ENCODE measurements at regions of chr6 and their contacts with region 1.

Region 1: DNA sequence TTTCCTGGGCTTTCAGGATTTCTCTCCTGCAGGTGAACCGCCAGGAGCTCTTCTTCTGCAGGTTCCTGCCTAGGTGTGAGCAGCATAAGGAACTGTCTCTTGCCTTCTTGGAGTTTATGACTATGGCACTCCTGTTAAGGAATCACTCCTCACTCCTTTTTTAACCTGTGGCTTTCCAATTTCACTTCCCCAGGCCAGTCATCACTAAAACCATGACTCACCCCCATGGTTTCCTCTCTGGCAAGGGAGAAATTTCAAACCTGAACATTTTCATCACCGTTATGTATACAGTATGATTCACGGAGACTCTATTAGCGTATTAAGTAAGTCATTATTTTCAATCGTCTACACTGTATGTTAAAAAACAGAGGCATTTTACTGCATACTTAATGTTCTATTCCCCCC is 78.2 kb upstream of the ARID1B start:
- DNase-seq: no peak
- H3K4me3 ChIP-seq: no peak overlapping the region
- H3K27ac ChIP-seq: no peak overlapping the region
- H3K4me1 ChIP-seq: no peaks in the 10 kb centered on the region
- H3K27me3 ChIP-seq: no peaks in the 10 kb centered on the region
- CTCF ChIP-seq: no peak
- POLR2A ChIP-seq: no peak

Region 2: GRCh38 chr6:155561257-155561965 is 1137.6 kb before region 1 on chr6:
- intact Hi-C with region 1: no loop called
- DNase-seq: no peak
- H3K4me3 ChIP-seq: no peak overlapping the region
- H3K27ac ChIP-seq: no peak overlapping the region
- H3K4me1 ChIP-seq: no peaks in the 10 kb centered on the region
- H3K27me3 ChIP-seq: no peaks in the 10 kb centered on the region
- CTCF ChIP-seq: no peak
- POLR2A ChIP-seq: no peak

Region 3: DNA sequence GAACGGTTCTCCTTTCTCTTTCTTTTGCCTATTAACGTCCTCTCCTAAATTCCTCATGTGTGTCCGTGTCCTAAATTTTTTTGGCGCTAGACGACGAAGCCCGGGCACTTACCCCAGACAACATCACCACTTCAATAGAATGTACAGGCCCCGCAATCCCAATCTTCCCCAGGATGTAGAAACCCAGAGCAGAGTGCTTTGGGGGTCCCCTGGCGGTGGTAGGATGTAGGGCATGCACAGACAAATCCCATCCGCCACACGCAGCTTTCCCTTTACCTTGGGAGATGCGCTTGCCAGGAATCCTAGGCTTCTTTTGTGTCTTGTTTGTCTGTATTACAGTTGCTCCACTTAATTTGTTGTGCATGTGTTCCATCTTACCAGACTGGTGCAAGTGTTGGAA is 339.1 kb before region 1 on chr6:
- intact Hi-C with region 1: loop called (anchors 5 kb)
- DNase-seq: no peak
- H3K4me3 ChIP-seq: no peak overlapping the region
- H3K27ac ChIP-seq: no peak overlapping the region
- H3K4me1 ChIP-seq: no peaks in the 10 kb centered on the region
- H3K27me3 ChIP-seq: no peaks in the 10 kb centered on the region
- CTCF ChIP-seq: no peak
- POLR2A ChIP-seq: no peak

Region 4: GRCh38 chr6:156683821-156684220 is 15.2 kb before region 1 on chr6:
- intact Hi-C with region 1: no loop called
- DNase-seq: no peak
- H3K4me3 ChIP-seq: no peak overlapping the region
- H3K27ac ChIP-seq: no peak overlapping the region
- H3K4me1 ChIP-seq: no peaks in the 10 kb centered on the region
- H3K27me3 ChIP-seq: no peaks in the 10 kb centered on the region
- CTCF ChIP-seq: no peak
- POLR2A ChIP-seq: no peak